T-cell (primary cell): ENCODE measurements at regions of chr20 and their contacts with region 1.

Region 1: DNA sequence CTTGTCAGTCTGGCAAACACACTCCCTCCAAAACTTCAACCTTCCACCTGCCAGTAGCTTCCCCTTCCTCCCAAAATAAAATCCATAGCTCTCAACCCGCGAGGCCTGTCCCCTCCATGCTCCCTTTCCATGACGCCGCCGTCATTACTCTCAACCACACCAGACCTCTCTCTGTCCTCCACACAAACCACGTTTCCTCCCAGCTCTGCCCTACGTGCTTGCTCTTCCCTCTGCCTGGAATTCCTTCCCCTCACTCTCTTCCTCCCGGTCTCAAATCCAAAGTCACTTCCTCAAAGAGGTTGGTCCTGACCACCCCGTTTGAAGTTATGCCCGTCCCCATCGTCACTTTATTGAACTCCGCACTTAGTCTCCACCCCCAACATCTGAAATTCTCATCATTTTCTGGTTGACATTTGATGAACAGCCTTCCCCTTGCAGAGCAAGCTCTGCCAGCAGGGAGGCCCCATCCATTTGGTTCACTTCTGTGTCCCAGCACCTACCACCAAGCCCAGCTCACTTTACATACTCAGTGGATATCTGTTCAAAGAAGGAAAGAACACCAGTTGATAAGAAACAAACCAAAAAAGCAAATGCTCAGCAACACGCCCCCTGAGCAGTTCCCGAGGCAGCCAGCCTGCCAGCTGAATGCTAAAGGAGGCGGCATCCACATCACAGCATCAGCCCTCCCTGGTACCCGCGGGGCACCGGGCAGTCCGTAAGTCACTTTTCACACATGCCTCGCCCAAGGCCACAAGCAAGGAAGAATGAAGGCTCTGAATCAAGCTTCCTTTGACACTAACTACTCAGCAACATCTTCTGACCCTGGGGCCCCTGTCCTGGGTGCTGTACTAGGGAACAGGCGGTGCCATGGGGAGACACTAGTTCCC is 125.0 kb downstream of the NFATC2 start:
- DNase-seq: peak in 24 of 35 experiments; percentile 14 to 67 (median 34)
- ATAC-seq: peak in 3 of 4 experiments; percentile 18 to 57 (median 47)
- H3K4me3 ChIP-seq: no peak overlapping the region
- H3K4me3 Mint-ChIP-seq: peak overlapping the region; percentile 2 to 42 (median 39)
- H3K27ac ChIP-seq: peak overlapping the region; percentile 81
- H3K27ac Mint-ChIP-seq: peak overlapping the region; percentile 84 to 97
- H3K4me1 ChIP-seq: peaks cover 0 to 62% of the 10 kb centered on the region in 2 experiments
- H3K4me1 Mint-ChIP-seq: peaks cover 45 to 88% (median 69%) of the 10 kb centered on the region in 3 donors
- H3K27me3 ChIP-seq: no peaks in the 10 kb centered on the region
- H3K27me3 Mint-ChIP-seq: no peaks in the 10 kb centered on the region

Region 2: DNA sequence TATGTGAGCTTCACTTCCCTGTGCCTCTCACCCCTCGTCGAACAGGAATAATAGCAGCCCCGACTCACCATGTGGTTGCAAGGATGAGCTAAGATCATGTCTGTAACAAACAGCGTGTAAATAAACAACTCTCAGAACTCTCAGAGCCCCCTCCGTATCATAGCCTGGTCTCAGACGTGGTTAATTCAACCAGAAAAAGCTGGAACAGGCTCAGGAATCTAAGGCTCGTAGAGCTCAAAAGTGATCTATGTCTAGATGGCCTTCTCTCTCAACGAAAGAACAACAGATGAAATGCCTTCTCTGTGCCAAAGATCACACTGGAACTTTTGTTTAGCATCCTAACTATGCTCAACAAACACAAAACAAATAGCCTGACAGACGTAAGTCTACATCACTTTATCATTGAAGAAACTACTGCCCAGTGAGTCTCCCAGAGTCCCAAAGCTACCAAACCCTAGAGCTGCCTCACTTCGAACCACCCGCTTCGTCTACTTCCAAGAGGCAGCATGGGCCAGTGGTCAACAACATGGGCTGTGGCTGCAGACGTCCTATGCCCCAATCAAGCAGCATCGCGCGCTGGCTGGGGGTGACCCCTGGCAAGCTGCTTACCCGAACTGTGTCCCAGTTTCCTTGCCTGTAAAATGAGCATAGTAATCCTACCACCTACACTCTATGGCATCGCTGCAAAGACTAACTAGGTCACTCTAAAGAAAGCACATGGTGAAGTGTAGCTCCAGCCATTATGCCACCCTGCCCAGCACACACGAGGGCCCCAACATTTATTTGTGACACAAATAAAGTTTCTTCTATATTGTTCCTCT is 89.9 kb after region 1 on chr20:
- CTCF ChIA-PET with region 1: no interaction called
- POLR2A ChIA-PET with region 1: no interaction called
- DNase-seq: no peak
- ATAC-seq: no peak
- H3K4me3 ChIP-seq: no peak overlapping the region
- H3K4me3 Mint-ChIP-seq: no peak overlapping the region
- H3K27ac ChIP-seq: no peak overlapping the region
- H3K27ac Mint-ChIP-seq: peak overlapping the region; percentile 39 to 74
- H3K4me1 ChIP-seq: peaks cover 19 to 64% of the 10 kb centered on the region in 2 experiments
- H3K4me1 Mint-ChIP-seq: peaks cover 59 to 81% (median 62%) of the 10 kb centered on the region in 3 donors
- H3K27me3 ChIP-seq: no peaks in the 10 kb centered on the region
- H3K27me3 Mint-ChIP-seq: no peaks in the 10 kb centered on the region

Region 3: GRCh38 chr20:51565745-51566144 is 148.3 kb after region 1 on chr20:
- CTCF ChIA-PET with region 1: interaction called in 1 of 2 experiments, 10 read pairs
- POLR2A ChIA-PET with region 1: no interaction called
- DNase-seq: no peak
- ATAC-seq: no peak
- H3K4me3 ChIP-seq: no peak overlapping the region
- H3K4me3 Mint-ChIP-seq: no peak overlapping the region
- H3K27ac ChIP-seq: no peak overlapping the region
- H3K27ac Mint-ChIP-seq: no peak overlapping the region
- H3K4me1 ChIP-seq: peaks cover 14 to 23% of the 10 kb centered on the region in 2 experiments
- H3K4me1 Mint-ChIP-seq: peaks cover 12 to 28% (median 21%) of the 10 kb centered on the region in 3 donors
- H3K27me3 ChIP-seq: peaks cover 12 to 52% of the 10 kb centered on the region in 2 experiments
- H3K27me3 Mint-ChIP-seq: peaks cover 28 to 31% of the 10 kb centered on the region in 2 donors